Transverse colon (tissue), 4 donors: ENCODE measurements at regions of chr9 and their contacts with region 1.

Region 1: DNA sequence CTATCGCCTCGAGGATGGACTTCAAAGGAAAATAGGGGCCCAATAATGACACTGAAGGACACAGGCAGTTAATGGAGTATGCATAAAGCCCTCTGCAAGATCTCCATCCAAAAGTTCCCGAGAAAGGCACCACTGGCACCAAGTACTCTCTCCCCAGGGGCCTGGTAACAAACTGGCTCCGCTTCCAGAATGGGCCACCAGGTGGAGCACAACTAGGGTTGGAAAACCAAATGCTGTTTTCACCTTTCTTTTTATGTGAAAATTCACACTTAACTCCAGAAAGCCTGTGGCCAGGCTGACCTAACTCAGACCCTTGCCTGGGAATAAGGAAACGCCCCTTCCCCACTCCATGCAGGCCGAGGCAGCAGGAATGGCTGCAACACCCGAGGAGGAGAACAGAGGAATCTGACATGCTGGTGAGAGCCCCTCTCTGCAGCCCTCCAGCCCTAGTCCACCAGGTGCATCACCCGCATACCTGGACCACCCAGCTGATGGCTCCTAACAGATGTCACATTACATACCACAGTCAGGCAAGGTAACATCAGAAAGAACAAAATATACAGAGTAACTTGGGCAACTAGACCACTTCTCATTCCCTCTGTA is 42.8 kb downstream of the CAMSAP1 start:
- DNase-seq: peak; percentile 59
- H3K4me3 ChIP-seq: no peak overlapping the region
- H3K27ac ChIP-seq: no peak overlapping the region
- H3K4me1 ChIP-seq: peaks cover 0 to 6% (median 0%) of the 10 kb centered on the region in 4 donors
- H3K27me3 ChIP-seq: no peaks in the 10 kb centered on the region
- CTCF ChIP-seq: peak; percentile 62 to 87 (median 86)
- EP300 ChIP-seq: no peak
- POLR2A ChIP-seq: no peak

Region 2: GRCh38 chr9:135951889-135952663 is 87.5 kb after region 1 on chr9:
- in situ Hi-C with region 1: loop called in 1 of 4 experiments (anchors 10 kb)
- intact Hi-C with region 1: no loop called
- DNase-seq: no peak
- H3K4me3 ChIP-seq: no peak overlapping the region
- H3K27ac ChIP-seq: no peak overlapping the region
- H3K4me1 ChIP-seq: peaks cover 0 to 3% (median 0%) of the 10 kb centered on the region in 4 donors
- H3K27me3 ChIP-seq: no peaks in the 10 kb centered on the region
- CTCF ChIP-seq: no peak
- EP300 ChIP-seq: no peak
- POLR2A ChIP-seq: no peak